Cardiac septum (tissue), 1 donor: ENCODE measurements at regions of chr19 and their contacts with region 1.

Region 1: DNA sequence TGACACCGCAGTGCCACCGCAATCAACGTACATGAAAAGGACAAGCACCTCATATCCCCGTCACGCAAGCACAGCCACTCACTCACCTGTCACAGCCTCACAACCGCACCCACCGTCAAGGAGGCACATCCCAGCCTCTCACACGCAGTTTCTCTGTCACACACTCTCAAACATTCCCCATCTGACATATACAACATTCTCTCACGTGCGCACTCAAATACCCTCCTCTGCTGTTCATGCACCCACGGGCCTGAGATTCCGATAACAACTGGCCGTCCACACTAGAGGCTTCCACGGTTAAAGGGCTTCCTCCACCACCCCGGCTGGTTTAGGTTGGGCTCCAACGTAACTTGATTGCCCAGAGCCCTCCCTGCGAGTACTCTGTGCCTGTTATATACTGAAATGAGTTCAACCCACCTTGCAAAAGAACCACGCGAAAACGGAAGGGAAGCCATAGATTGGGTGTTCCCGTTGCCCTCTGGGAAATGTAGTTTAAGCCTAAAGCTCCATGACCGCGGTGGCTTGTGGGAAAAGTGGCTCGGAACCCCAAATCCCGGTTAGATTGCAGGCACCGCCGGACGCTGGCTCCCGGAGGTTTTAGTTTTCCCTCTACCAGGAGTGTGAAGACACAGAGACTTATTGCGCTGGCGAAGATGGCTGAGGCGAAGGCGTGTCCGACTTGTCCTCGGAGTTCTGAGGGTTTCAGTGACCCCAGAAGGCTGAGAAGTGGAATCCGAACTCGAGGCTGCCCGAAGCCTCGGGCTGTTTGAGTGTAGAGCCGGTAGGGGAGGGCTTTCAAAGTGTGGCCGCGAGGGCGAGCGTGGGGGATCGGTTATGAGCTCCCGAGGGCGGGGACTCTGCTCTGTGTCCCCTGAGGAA is at the start of gene ZNF573:
- DNase-seq: peak; percentile 91
- total RNA-seq, gene ZNF573: 9.9 TPM

Region 2: GRCh38 chr19:37719111-37719926 is 60.0 kb before region 1 on chr19 and contains the start of gene ZNF607:
- intact Hi-C with region 1: loop called (anchors 2 kb)
- DNase-seq: peak; percentile 93
- total RNA-seq, gene ZNF607: 4.9 TPM